ENCODE measurements at regions of chr5 and their contacts with region 1.

Region 1: DNA sequence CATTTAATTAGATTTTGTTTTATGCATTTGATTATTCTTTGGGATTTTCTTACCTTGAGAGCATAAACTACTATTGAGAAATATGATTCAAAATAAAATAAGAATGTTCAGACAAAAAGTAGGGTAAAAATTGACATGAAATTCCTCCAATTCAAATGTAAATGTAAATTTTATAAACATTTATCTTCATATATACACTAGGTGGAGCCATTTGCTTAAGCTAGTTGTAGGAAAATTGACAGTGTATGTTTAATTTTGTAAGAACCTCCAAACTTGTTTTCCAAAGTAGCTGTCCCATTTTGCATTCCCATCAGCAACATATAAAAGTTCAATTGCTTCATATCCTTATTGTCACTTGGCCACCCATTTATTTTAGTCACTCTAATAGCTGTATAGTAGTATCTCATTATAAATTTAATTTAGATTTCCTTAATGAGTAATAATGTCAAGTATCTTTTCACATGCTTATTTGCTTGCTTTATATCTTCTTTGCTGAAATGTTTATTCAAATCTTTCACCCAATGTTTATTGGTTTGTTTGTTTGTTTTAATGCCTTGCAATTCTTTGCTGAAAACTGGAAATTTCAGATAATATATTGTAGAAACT is 37.6 kb upstream of the SLCO6A1 start:
- DNase-seq: peak in 2 of 9 experiments; percentile 1 to 14
- ATAC-seq: no peak
- H3K4me3 ChIP-seq: no peak overlapping the region
- H3K4me3 Mint-ChIP-seq: no peak overlapping the region
- H3K27ac ChIP-seq: no peak overlapping the region
- H3K27ac Mint-ChIP-seq: no peak overlapping the region
- H3K4me1 ChIP-seq: no peaks in the 10 kb centered on the region
- H3K4me1 Mint-ChIP-seq: no peaks in the 10 kb centered on the region
- H3K27me3 ChIP-seq: no peaks in the 10 kb centered on the region
- H3K27me3 Mint-ChIP-seq: peaks cover 2% of the 10 kb centered on the region
- CTCF ChIP-seq: peak; percentile 28

Region 2: DNA sequence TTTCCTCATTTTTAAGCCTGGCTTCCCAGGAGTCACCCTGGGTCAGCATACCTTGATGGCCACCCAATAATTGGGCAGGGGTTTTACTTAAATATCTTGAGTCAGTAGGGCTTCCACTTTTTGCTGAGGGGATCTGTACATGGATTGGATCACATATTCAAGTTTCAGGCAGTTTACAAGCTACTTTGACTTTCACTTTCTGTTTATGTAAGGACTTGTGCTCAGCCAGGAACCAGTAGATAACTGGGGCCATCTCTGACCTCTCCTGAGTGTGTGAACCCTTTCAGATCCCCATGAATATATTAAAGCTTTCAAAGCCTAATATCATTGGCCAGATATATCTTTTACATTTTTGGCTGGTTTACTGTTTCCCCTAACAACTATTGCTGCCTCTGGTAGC is 82.7 kb before region 1 on chr5:
- CTCF ChIA-PET with region 1: no interaction called
- POLR2A ChIA-PET with region 1: no interaction called
- intact Hi-C with region 1: no loop called
- DNase-seq: peak in 1 of 9 experiments; percentile 1
- ATAC-seq: no peak
- H3K4me3 ChIP-seq: no peak overlapping the region
- H3K4me3 Mint-ChIP-seq: no peak overlapping the region
- H3K27ac ChIP-seq: no peak overlapping the region
- H3K27ac Mint-ChIP-seq: no peak overlapping the region
- H3K4me1 ChIP-seq: no peaks in the 10 kb centered on the region
- H3K4me1 Mint-ChIP-seq: no peaks in the 10 kb centered on the region
- H3K27me3 ChIP-seq: no peaks in the 10 kb centered on the region
- H3K27me3 Mint-ChIP-seq: peaks cover 2% of the 10 kb centered on the region
- CTCF ChIP-seq: no peak

Region 3: DNA sequence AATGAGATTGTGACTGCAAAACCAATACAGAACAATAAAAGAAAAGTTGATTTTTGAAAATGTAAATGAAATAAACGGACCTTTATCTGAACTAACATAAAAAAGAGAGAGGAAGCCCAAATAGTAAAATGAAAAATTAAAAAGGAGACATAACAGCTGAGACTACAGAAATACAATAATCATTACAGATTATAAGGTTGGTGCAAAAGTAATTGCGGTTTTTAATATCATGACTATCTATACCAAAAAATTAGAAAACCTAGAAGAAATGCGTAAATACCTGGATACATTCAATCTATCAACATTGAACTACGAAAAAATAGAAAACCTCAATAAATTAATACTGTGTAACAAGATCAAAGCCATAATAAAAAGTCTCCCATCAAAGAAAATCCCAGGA is 34.3 kb after region 1 on chr5:
- CTCF ChIA-PET with region 1: no interaction called
- POLR2A ChIA-PET with region 1: no interaction called
- intact Hi-C with region 1: no loop called
- DNase-seq: no peak
- ATAC-seq: no peak
- H3K4me3 ChIP-seq: no peak overlapping the region
- H3K4me3 Mint-ChIP-seq: no peak overlapping the region
- H3K27ac ChIP-seq: no peak overlapping the region
- H3K27ac Mint-ChIP-seq: no peak overlapping the region
- H3K4me1 ChIP-seq: no peaks in the 10 kb centered on the region
- H3K4me1 Mint-ChIP-seq: no peaks in the 10 kb centered on the region
- H3K27me3 ChIP-seq: peaks cover 0 to 3% of the 10 kb centered on the region in 2 experiments
- H3K27me3 Mint-ChIP-seq: peaks cover 11% of the 10 kb centered on the region
- CTCF ChIP-seq: no peak

Region 4: GRCh38 chr5:103224118-103224893 is 687.9 kb after region 1 on chr5:
- CTCF ChIA-PET with region 1: interaction called, 7 read pairs
- POLR2A ChIA-PET with region 1: no interaction called
- intact Hi-C with region 1: loop called in 1 of 2 experiments (anchors 5 kb)
- DNase-seq: peak in 8 of 9 experiments; percentile 1 to 70 (median 36)
- ATAC-seq: peak; percentile 99
- H3K4me3 ChIP-seq: no peak overlapping the region
- H3K4me3 Mint-ChIP-seq: no peak overlapping the region
- H3K27ac ChIP-seq: no peak overlapping the region
- H3K27ac Mint-ChIP-seq: no peak overlapping the region
- H3K4me1 ChIP-seq: no peaks in the 10 kb centered on the region
- H3K4me1 Mint-ChIP-seq: no peaks in the 10 kb centered on the region
- H3K27me3 ChIP-seq: no peaks in the 10 kb centered on the region
- H3K27me3 Mint-ChIP-seq: peaks cover 15% of the 10 kb centered on the region
- CTCF ChIP-seq: peak; percentile 70